ENCODE measurements at regions of chr9 and their contacts with region 1.

Region 1: GRCh38 chr9:38720083-38720745 is at the start of gene FAM240B:
- DNase-seq: no peak
- ATAC-seq: no peak
- H3K4me3 ChIP-seq: no peak within 1 kb of the TSS
- H3K27ac ChIP-seq: no peak within 1 kb of the TSS
- H3K4me1 ChIP-seq: no peaks in the 10 kb centered on the region
- H3K27me3 ChIP-seq: no peaks in the 10 kb centered on the region
- CTCF ChIP-seq: no peak
- EP300 ChIP-seq: no peak
- POLR2A ChIP-seq: no peak
- RAD21 ChIP-seq: no peak
- polyA plus RNA-seq, gene FAM240B: not detected

Region 2: DNA sequence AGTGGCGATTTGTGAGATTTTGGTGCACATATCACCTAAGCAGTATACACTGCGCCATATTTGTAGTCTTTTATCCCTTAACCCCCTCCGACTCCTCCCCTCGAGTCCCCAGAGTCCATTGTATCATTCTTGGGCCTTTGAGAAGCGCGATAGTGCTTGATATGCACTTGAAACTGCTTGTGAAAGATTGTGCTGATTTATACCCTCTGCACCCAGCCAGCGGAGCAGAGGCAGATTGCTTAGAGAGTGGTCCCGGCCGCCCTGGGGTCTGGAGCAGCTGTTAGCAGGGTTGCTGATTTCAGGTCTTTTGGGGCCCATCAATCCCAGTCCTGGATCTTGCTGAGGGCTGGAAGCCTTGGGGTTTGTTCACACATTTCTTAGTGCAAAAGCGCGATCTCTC is 12.7 kb after region 1 on chr9:
- CTCF ChIA-PET with region 1: no interaction called
- POLR2A ChIA-PET with region 1: no interaction called
- RAD21 ChIA-PET with region 1: no interaction called
- SMC1A ChIA-PET with region 1: no interaction called
- in situ Hi-C with region 1: no loop called
- intact Hi-C with region 1: loop called (anchors 2 kb)
- DNase-seq: no peak
- ATAC-seq: no peak
- H3K4me3 ChIP-seq: no peak overlapping the region
- H3K27ac ChIP-seq: no peak overlapping the region
- H3K4me1 ChIP-seq: no peaks in the 10 kb centered on the region
- H3K27me3 ChIP-seq: no peaks in the 10 kb centered on the region
- CTCF ChIP-seq: no peak
- EP300 ChIP-seq: no peak
- POLR2A ChIP-seq: no peak
- RAD21 ChIP-seq: no peak